ENCODE measurements at regions of chr17 and their contacts with region 1.

Region 1: DNA sequence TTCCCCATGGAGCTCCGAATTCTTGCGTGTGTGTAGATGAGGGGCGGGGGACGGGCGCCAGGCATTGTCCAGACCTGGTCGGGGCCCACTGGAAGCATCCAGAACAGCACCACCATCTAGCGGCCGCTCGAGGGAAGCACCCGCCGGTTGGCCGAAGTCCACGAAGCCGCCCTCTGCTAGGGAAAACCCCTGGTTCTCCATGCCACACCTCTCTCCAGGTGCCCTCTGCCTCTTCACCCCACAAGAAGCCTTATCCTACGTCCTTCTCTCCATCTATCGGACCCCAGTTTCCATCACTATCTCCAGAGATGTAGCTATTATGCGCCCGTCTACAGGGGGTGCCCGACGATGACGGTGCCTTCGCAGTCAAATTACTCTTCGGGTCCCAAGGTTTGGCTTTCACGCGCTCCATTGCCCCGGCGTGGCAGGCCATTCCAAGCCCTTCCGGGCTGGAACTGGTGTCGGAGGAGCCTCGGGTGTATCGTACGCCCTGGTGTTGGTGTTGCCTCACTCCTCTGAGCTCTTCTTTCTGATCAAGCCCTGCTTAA is 617 bp upstream of the SENP3 start:
- DNase-seq: peak; percentile 80 to 89
- ATAC-seq: peak; percentile 69 to 86 (median 75)
- H3K4me3 ChIP-seq: peak overlapping the region; percentile 67
- H3K4me3 Mint-ChIP-seq: peak overlapping the region; percentile 98
- H3K27ac ChIP-seq: peak overlapping the region; percentile 93
- H3K27ac Mint-ChIP-seq: peak overlapping the region; percentile 97 to 99
- H3K4me1 ChIP-seq: peaks cover 53% of the 10 kb centered on the region
- H3K4me1 Mint-ChIP-seq: peaks cover 22 to 35% of the 10 kb centered on the region in 2 donors
- H3K27me3 ChIP-seq: no peaks in the 10 kb centered on the region
- H3K27me3 Mint-ChIP-seq: no peaks in the 10 kb centered on the region
- CTCF ChIP-seq: peak; percentile 75

Region 2: DNA sequence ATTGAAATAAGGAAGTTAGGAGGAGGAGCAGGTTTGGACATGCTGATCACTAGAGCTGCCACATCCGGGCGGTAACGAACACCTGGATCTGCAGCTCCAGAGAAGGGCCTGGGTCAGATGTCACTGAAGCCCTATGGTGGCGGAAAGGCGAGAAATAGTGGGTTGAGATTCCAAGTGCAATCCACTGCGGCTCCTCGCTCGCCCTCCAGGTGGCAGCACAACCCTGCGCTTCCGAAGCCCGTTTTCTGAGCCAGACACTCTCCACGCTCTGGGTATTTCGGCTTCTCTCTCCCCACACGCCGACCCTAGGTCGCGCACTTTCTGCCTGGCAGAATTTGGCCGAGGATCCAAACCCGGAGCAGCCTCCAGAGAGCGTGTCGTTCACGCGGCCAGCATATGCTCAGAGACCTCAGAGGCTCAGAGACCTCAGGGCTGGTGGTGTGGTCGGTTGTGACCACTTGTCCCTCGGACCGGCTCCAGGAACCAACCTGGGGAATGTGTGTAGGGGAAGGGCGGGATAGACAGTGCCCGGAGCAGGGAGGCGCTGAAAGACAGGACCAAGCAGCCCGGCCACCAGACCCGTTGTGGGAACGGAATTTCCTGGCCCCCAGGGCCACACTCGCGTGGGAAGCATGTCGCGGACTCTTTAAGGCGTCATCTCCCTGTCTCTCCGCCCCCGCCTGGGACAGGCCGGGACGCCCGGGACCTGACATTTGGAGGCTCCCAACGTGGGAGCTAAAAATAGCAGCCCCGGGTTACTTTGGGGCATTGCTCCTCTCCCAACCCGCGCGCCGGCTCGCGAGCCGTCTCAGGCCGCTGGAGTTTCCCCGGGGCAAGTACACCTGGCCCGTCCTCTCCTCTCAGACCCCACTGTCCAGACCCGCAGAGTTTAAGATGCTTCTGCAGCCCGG is 280.3 kb before region 1 on chr17:
- intact Hi-C with region 1: loop called (anchors 1 kb)
- DNase-seq: peak; percentile 84 to 88
- ATAC-seq: peak; percentile 89 to 95 (median 91)
- H3K4me3 ChIP-seq: peak overlapping the region; percentile 23
- H3K4me3 Mint-ChIP-seq: peak overlapping the region; percentile 90
- H3K27ac ChIP-seq: no peak overlapping the region
- H3K27ac Mint-ChIP-seq: peak overlapping the region in 1 of 2 donors; percentile 16
- H3K4me1 ChIP-seq: peaks cover 31% of the 10 kb centered on the region
- H3K4me1 Mint-ChIP-seq: peaks cover 22 to 31% of the 10 kb centered on the region in 2 donors
- H3K27me3 ChIP-seq: peaks cover 29% of the 10 kb centered on the region
- H3K27me3 Mint-ChIP-seq: peaks cover 18 to 24% of the 10 kb centered on the region in 2 donors
- CTCF ChIP-seq: peak; percentile 94

Region 3: DNA sequence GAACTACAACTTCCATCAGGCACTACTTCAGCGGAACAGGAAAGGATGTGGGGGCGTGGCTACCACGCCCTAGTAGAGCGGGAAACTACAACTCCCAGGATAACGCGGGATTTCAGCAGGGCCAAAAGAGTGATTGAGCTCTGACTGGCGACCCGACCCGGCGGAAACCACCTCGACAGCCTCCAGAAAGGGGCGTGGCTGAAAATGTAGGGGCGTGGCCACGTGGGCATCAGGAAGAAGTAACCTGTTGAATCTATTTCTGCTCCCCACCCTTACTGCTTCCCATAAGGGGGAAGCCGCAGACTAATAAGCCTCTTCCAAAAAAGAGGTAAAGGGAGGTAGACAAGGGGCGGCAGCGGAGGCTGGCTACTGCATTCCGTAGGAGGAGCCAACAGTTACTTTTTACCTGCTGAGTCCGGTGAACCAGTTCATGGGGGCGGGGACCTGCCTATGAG is 125.9 kb before region 1 on chr17 and contains the start of gene TMEM102:
- intact Hi-C with region 1: loop called (anchors 2 kb)
- DNase-seq: peak; percentile 97 to 99
- ATAC-seq: peak; percentile 88 to 95 (median 89)
- H3K4me3 ChIP-seq: peak within 1 kb of the TSS; percentile 50
- H3K4me3 Mint-ChIP-seq: peak within 1 kb of the TSS; percentile 91
- H3K27ac ChIP-seq: peak within 1 kb of the TSS; percentile 73
- H3K27ac Mint-ChIP-seq: peak within 1 kb of the TSS; percentile 93 to 95
- H3K4me1 ChIP-seq: peaks cover 50% of the 10 kb centered on the region
- H3K4me1 Mint-ChIP-seq: peaks cover 25 to 44% of the 10 kb centered on the region in 2 donors
- H3K27me3 ChIP-seq: peaks cover 19% of the 10 kb centered on the region
- H3K27me3 Mint-ChIP-seq: peaks cover 10 to 17% of the 10 kb centered on the region in 2 donors
- CTCF ChIP-seq: no peak
- total RNA-seq, gene TMEM102: 5.1 to 8.6 (median 7.0) TPM

Region 4: GRCh38 chr17:7515911-7516610 is 45.0 kb before region 1 on chr17:
- intact Hi-C with region 1: loop called (anchors 1 kb)
- DNase-seq: no peak
- ATAC-seq: no peak
- H3K4me3 ChIP-seq: no peak overlapping the region
- H3K4me3 Mint-ChIP-seq: no peak overlapping the region
- H3K27ac ChIP-seq: no peak overlapping the region
- H3K27ac Mint-ChIP-seq: no peak overlapping the region
- H3K4me1 ChIP-seq: no peaks in the 10 kb centered on the region
- H3K4me1 Mint-ChIP-seq: peaks cover 0 to 11% of the 10 kb centered on the region in 2 donors
- H3K27me3 ChIP-seq: no peaks in the 10 kb centered on the region
- H3K27me3 Mint-ChIP-seq: no peaks in the 10 kb centered on the region
- CTCF ChIP-seq: no peak

Region 5: GRCh38 chr17:7548585-7549400 is 12.3 kb before region 1 on chr17 and contains the start of gene TNFSF12:
- intact Hi-C with region 1: loop called (anchors 1 kb)
- DNase-seq: peak; percentile 53 to 69
- ATAC-seq: peak; percentile 81 to 83 (median 83)
- H3K4me3 ChIP-seq: peak within 1 kb of the TSS; percentile 64
- H3K4me3 Mint-ChIP-seq: peak within 1 kb of the TSS; percentile 90
- H3K27ac ChIP-seq: peak within 1 kb of the TSS; percentile 77
- H3K27ac Mint-ChIP-seq: peak within 1 kb of the TSS; percentile 82 to 86
- H3K4me1 ChIP-seq: peaks cover 50% of the 10 kb centered on the region
- H3K4me1 Mint-ChIP-seq: peaks cover 49 to 59% of the 10 kb centered on the region in 2 donors
- H3K27me3 ChIP-seq: no peaks in the 10 kb centered on the region
- H3K27me3 Mint-ChIP-seq: no peaks in the 10 kb centered on the region
- CTCF ChIP-seq: peak; percentile 12
- total RNA-seq, gene TNFSF12: 49.1 to 62.6 (median 60.3) TPM

Region 6: GRCh38 chr17:8409966-8410864 is 849.1 kb after region 1 on chr17:
- intact Hi-C with region 1: no loop called
- DNase-seq: peak; percentile 72 to 91
- ATAC-seq: peak; percentile 71 to 91 (median 88)
- H3K4me3 ChIP-seq: no peak overlapping the region
- H3K4me3 Mint-ChIP-seq: no peak overlapping the region
- H3K27ac ChIP-seq: no peak overlapping the region
- H3K27ac Mint-ChIP-seq: no peak overlapping the region
- H3K4me1 ChIP-seq: peaks cover 6% of the 10 kb centered on the region
- H3K4me1 Mint-ChIP-seq: peaks cover 6 to 9% of the 10 kb centered on the region in 2 donors
- H3K27me3 ChIP-seq: peaks cover 6% of the 10 kb centered on the region
- H3K27me3 Mint-ChIP-seq: peaks cover 11 to 12% of the 10 kb centered on the region in 2 donors
- CTCF ChIP-seq: peak; percentile 92

Measured in natural killer cell (primary cell).